ENCODE measurements at regions of chr7 and their contacts with region 1.

Region 1: DNA sequence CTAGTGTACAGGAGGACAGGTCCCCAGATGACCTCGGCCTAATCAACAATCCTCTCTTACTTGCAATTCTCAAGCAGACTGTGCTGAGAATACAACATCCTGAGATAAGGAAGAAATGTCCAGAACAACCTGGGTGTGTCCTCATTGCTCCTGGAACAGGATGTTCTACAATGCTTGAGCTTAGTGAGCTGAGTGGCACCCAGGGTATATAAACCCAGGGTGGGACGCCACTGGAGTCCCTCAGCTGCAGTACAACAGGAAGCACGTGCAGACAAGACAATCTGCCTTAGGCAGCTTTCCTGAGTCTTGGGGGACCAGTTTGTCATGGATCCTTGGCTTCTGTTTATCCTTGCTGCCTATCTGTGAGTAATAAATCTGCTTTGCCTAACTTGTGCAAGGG is 27.7 kb upstream of the SLC25A13 start:
- DNase-seq: no peak
- H3K4me3 ChIP-seq: no peak overlapping the region
- H3K27ac ChIP-seq: no peak overlapping the region
- H3K4me1 ChIP-seq: no peaks in the 10 kb centered on the region
- H3K27me3 ChIP-seq: no peaks in the 10 kb centered on the region
- CTCF ChIP-seq: no peak

Region 2: DNA sequence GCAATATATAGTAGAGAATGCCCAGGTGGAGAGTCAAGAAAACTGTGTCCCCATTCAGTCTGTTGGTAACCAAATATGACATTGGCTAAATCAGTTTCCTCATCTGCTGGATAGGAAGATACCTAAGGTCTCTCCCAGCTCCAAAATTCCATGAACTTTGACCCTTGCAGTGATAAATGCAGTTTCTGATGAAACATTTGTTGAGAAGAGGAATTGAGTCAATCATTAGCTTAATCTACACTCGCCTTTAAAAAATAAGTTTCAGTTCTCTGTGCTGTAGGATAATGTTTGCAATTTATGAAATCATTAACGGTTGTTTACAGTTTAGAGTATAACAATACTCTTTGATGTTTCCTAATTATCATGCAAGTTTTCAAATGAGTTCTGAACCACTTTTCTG is 10.3 kb after region 1 on chr7:
- intact Hi-C with region 1: no loop called
- DNase-seq: no peak
- H3K4me3 ChIP-seq: no peak overlapping the region
- H3K27ac ChIP-seq: no peak overlapping the region
- H3K4me1 ChIP-seq: no peaks in the 10 kb centered on the region
- H3K27me3 ChIP-seq: no peaks in the 10 kb centered on the region
- CTCF ChIP-seq: no peak

Region 3: DNA sequence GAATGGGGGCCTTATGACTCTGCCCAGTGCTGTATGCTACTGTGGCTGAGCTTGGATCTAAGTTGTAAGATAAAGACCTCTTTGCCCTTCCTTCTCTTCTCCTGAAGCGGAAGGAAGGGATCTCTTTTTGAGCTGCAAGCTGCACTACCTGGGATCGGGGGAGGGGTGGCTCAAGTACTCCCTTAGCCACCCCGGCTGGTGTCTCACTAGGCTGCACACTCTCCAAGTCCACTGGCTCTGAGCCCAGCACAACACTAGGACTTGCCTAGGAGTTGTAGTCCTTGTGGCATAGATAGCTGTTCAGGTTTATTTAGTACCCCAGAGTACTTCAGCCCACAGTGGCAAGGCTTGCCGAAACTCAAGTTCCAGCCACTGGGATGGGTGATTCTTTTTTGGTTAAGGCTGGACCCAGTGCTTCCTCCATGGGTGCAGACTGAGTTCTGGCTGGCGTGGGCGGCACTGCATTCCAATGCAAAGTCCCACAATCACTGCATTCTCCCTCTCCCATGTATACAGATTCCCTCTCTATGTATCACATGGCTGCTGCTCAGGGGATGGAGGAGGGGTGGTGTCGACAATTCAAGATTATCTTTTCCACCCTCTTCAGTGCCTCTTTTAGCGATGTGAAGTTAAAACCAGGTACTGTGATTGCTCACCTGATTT is 48.5 kb after region 1 on chr7:
- intact Hi-C with region 1: loop called (anchors 5 kb)
- DNase-seq: no peak
- H3K4me3 ChIP-seq: no peak overlapping the region
- H3K27ac ChIP-seq: no peak overlapping the region
- H3K4me1 ChIP-seq: no peaks in the 10 kb centered on the region
- H3K27me3 ChIP-seq: no peaks in the 10 kb centered on the region
- CTCF ChIP-seq: no peak